H1 (cell line): ENCODE measurements at regions of chr16 and their contacts with region 1.

Region 1: GRCh38 chr16:19287241-19287640 is 1.7 kb downstream of the CLEC19A start:
- DNase-seq: no peak
- H3K4me3 ChIP-seq: no peak overlapping the region; a peak in 1 of 8 replicates
- H3K27ac ChIP-seq: no peak overlapping the region
- H3K4me1 ChIP-seq: peaks cover 11 to 32% (median 24%) of the 10 kb centered on the region in 4 experiments
- H3K27me3 ChIP-seq: no peaks in the 10 kb centered on the region
- CTCF ChIP-seq: no peak
- EP300 ChIP-seq: no peak
- POLR2A ChIP-seq: no peak
- RAD21 ChIP-seq: no peak

Region 2: DNA sequence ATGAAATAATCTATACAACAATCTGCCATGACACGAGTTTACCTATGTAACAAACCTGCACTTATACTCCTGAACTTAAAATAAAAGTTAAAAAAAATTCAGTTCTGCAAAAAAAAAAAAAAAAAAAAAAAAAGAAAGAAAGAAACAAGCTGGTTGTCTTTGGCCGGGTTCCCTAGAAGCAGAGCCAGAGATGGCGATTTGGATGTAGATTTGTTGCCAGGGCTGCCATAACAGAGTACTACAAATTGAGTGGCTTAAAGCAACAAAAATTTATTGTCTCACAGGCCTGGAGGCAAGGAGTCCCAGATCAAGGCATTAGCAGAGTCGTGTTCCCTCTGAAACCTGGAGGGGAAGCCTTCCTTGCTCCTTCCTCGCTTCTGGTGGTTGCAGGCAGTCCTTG is 98.8 kb before region 1 on chr16:
- CTCF ChIA-PET with region 1: no interaction called
- POLR2A ChIA-PET with region 1: no interaction called
- DNase-seq: no peak
- H3K4me3 ChIP-seq: no peak overlapping the region
- H3K27ac ChIP-seq: no peak overlapping the region
- H3K4me1 ChIP-seq: peaks cover 0 to 8% (median 4%) of the 10 kb centered on the region in 4 experiments; a peak in 3 of 7 replicates
- H3K27me3 ChIP-seq: no peaks in the 10 kb centered on the region
- CTCF ChIP-seq: no peak
- EP300 ChIP-seq: no peak
- POLR2A ChIP-seq: no peak
- RAD21 ChIP-seq: no peak

Region 3: GRCh38 chr16:19236561-19237209 is 50.6 kb before region 1 on chr16:
- CTCF ChIA-PET with region 1: no interaction called
- POLR2A ChIA-PET with region 1: no interaction called
- DNase-seq: no peak
- H3K4me3 ChIP-seq: no peak overlapping the region
- H3K27ac ChIP-seq: no peak overlapping the region
- H3K4me1 ChIP-seq: no peaks in the 10 kb centered on the region
- H3K27me3 ChIP-seq: no peaks in the 10 kb centered on the region
- CTCF ChIP-seq: no peak
- EP300 ChIP-seq: no peak
- POLR2A ChIP-seq: no peak
- RAD21 ChIP-seq: no peak

Region 4: GRCh38 chr16:19265380-19265930 is 21.8 kb before region 1 on chr16:
- CTCF ChIA-PET with region 1: interaction called, 14 read pairs
- POLR2A ChIA-PET with region 1: interaction called, 6 read pairs
- DNase-seq: no peak
- H3K4me3 ChIP-seq: no peak overlapping the region
- H3K27ac ChIP-seq: no peak overlapping the region
- H3K4me1 ChIP-seq: no peaks in the 10 kb centered on the region
- H3K27me3 ChIP-seq: no peaks in the 10 kb centered on the region
- CTCF ChIP-seq: no peak
- EP300 ChIP-seq: no peak
- POLR2A ChIP-seq: no peak
- RAD21 ChIP-seq: no peak

Region 5: DNA sequence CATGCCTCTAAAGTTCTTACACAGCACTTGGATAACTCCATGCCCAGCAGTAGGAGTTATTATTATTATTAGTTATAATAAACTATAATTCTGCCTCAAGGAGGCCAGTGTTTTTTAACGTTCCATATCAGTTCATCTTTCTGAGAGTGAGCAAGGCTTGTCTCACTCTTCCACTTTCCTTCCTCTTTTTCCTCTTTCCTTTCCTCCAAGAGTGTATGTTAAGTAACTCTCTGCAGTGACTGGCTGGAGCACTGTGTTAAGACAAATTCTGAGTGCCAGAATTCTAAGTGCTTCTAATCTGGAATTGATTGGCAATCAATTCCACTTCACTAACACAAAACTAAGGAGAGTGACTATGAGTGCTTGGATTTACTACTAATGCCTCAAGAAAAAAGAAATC is 14.7 kb after region 1 on chr16:
- CTCF ChIA-PET with region 1: no interaction called
- POLR2A ChIA-PET with region 1: no interaction called
- DNase-seq: no peak
- H3K4me3 ChIP-seq: no peak overlapping the region
- H3K27ac ChIP-seq: no peak overlapping the region
- H3K4me1 ChIP-seq: no peaks in the 10 kb centered on the region
- H3K27me3 ChIP-seq: no peaks in the 10 kb centered on the region
- CTCF ChIP-seq: no peak
- EP300 ChIP-seq: no peak
- POLR2A ChIP-seq: no peak
- RAD21 ChIP-seq: no peak